Activated CD4-positive, alpha-beta T cell treated with anti-CD3 and anti-CD28 coated beads for 36 hours (primary cell): ENCODE measurements at regions of chr17 and their contacts with region 1.

Region 1: GRCh38 chr17:40130352-40131042 is 8.7 kb downstream of the MSL1 start:
- DNase-seq: no peak
- ATAC-seq: no peak
- H3K4me3 Mint-ChIP-seq: no peak overlapping the region
- H3K27ac Mint-ChIP-seq: peak overlapping the region; percentile 62
- H3K4me1 Mint-ChIP-seq: peaks cover 11% of the 10 kb centered on the region
- H3K27me3 Mint-ChIP-seq: no peaks in the 10 kb centered on the region

Region 2: GRCh38 chr17:38879878-38880682 is 1250.4 kb before region 1 on chr17:
- CTCF ChIA-PET with region 1: no interaction called
- POLR2A ChIA-PET with region 1: interaction called, 11 read pairs
- intact Hi-C with region 1: no loop called
- DNase-seq: no peak
- ATAC-seq: no peak
- H3K4me3 Mint-ChIP-seq: no peak overlapping the region
- H3K27ac Mint-ChIP-seq: peak overlapping the region; percentile 75
- H3K4me1 Mint-ChIP-seq: peaks cover 90% of the 10 kb centered on the region
- H3K27me3 Mint-ChIP-seq: no peaks in the 10 kb centered on the region

Region 3: GRCh38 chr17:40209404-40210093 is 79.1 kb after region 1 on chr17:
- CTCF ChIA-PET with region 1: no interaction called
- POLR2A ChIA-PET with region 1: no interaction called
- intact Hi-C with region 1: no loop called
- DNase-seq: no peak
- ATAC-seq: no peak
- H3K4me3 Mint-ChIP-seq: no peak overlapping the region
- H3K27ac Mint-ChIP-seq: no peak overlapping the region
- H3K4me1 Mint-ChIP-seq: no peaks in the 10 kb centered on the region
- H3K27me3 Mint-ChIP-seq: no peaks in the 10 kb centered on the region